ENCODE measurements at regions of chr3 and their contacts with region 1.

Region 1: DNA sequence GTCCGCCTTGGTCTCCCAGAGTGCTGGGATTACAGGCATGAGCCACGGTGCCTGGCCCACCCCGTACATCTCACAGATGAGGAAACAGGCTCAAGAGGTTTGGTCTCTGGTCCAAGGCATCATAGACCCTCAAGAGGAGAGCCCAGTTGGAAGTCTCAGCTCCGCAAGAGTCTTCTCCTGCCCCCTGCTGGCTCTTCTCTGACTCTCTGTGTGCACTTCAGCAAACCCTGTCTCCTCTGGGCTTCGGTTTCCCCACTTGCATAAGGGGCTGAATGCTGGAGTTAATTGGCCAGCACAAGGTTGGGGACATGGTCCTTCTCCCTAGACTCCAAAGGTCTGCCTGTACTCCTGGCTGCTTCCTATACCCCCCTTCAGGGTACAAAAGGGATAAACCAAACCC is 3.9 kb downstream of the MST1R start:
- DNase-seq: peak; percentile 23
- ATAC-seq: no peak
- H3K4me3 ChIP-seq: peak overlapping the region; percentile 63
- H3K27ac ChIP-seq: peak overlapping the region; percentile 99
- H3K4me1 ChIP-seq: peaks cover 59% of the 10 kb centered on the region
- H3K27me3 ChIP-seq: no peaks in the 10 kb centered on the region
- CTCF ChIP-seq: peak; percentile 49

Region 2: GRCh38 chr3:49867871-49868321 is 31.9 kb before region 1 on chr3:
- CTCF ChIA-PET with region 1: no interaction called
- POLR2A ChIA-PET with region 1: no interaction called
- intact Hi-C with region 1: no loop called
- DNase-seq: peak; percentile 32
- ATAC-seq: peak; percentile 25; the same call in 1 of the 2 replicates
- H3K4me3 ChIP-seq: no peak overlapping the region
- H3K27ac ChIP-seq: no peak overlapping the region
- H3K4me1 ChIP-seq: no peaks in the 10 kb centered on the region
- H3K27me3 ChIP-seq: peaks cover 3% of the 10 kb centered on the region; the same call in 1 of the 2 replicates
- CTCF ChIP-seq: no peak

Region 3: GRCh38 chr3:49939858-49940666 is 40.2 kb after region 1 on chr3 and contains the start of gene RBM6:
- CTCF ChIA-PET with region 1: no interaction called
- POLR2A ChIA-PET with region 1: no interaction called
- intact Hi-C with region 1: no loop called
- DNase-seq: peak; percentile 96
- ATAC-seq: peak; percentile 98
- H3K4me3 ChIP-seq: peak within 1 kb of the TSS; percentile 91
- H3K27ac ChIP-seq: peak within 1 kb of the TSS; percentile 82
- H3K4me1 ChIP-seq: peaks cover 4% of the 10 kb centered on the region
- H3K27me3 ChIP-seq: no peaks in the 10 kb centered on the region
- CTCF ChIP-seq: no peak
- total RNA-seq, gene RBM6: 64.6 and 73.5 TPM in 2 replicates

Region 4: GRCh38 chr3:50078622-50079021 is 178.8 kb after region 1 on chr3:
- CTCF ChIA-PET with region 1: no interaction called
- POLR2A ChIA-PET with region 1: interaction called, 15 read pairs
- intact Hi-C with region 1: no loop called
- DNase-seq: peak; percentile 23
- ATAC-seq: peak; percentile 38; the same call in 1 of the 2 replicates
- H3K4me3 ChIP-seq: no peak overlapping the region
- H3K27ac ChIP-seq: no peak overlapping the region
- H3K4me1 ChIP-seq: no peaks in the 10 kb centered on the region
- H3K27me3 ChIP-seq: no peaks in the 10 kb centered on the region
- CTCF ChIP-seq: no peak

Measured in PC-3 (cell line).